Posterior vena cava (tissue), 2 donors: ENCODE measurements at regions of chr10 and their contacts with region 1.

Region 1: GRCh38 chr10:86003201-86003621 is 363.4 kb downstream of the GRID1 start:
- DNase-seq: no peak

Region 2: DNA sequence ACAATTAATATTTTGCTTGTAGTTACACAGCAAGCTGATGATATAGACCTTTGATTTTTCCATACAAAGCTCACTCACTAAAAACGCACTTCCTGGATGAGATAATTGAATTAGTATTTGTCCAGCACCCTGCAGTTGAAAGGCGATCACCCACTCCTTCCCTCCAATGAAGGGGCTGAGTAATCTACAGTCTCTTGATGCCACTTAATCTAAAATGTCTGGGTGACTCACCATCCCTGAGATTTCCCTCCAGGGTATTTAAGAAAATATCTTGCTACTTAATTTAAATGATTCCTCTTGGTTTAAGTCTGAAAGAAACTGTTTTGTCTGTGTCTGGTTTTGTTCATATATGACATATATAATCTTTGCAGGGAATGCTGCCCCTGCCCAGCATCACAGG is 151.9 kb before region 1 on chr10:
- intact Hi-C with region 1: no loop called
- DNase-seq: no peak

Region 3: DNA sequence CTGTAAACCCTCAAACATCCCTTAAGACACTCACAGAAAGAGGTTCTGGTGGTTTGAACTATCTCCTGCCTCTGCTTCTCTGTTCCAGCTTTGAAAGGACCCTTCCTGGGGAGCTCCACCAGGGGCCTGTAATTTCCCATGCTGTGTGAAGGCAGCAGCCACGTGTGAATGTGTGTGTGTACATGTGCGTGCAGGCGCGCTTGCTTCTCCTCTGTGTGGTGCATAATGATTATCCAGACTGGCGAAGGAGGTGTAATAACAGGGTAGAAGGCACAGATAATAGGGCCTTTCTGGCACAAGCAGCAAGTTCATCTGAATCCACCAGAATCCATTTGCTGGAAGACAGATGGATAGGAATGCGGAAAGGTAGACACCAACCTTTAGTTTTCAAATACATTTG is 103.2 kb before region 1 on chr10:
- intact Hi-C with region 1: no loop called
- DNase-seq: no peak

Region 4: DNA sequence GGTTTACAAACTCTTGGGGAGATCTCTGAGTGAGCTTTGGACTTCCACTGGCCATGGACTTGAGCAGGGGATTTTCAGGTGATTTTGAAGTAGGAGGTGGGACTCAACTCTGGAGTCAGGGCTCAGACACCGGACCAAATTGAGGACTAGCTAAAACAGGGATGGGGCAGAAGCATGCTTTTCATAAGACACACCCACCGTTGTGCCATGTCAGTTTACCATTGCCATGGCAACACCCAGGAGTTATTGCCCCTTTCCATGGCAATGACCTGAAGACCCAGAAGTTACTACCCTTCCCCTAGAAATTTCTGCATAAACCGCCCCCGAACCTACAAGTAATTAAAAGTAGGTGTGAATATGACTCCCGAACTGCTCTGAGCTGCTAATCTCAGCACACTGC is 42.7 kb after region 1 on chr10:
- intact Hi-C with region 1: loop called in 1 of 2 experiments (anchors 1 kb)
- DNase-seq: no peak

Region 5: GRCh38 chr10:86077871-86078638 is 74.8 kb after region 1 on chr10:
- intact Hi-C with region 1: loop called in 1 of 2 experiments (anchors 2 kb)
- DNase-seq: peak; percentile 62